Psoas muscle (tissue), 8 donors: ENCODE measurements at regions of chr19 and their contacts with region 1.

Region 1: DNA sequence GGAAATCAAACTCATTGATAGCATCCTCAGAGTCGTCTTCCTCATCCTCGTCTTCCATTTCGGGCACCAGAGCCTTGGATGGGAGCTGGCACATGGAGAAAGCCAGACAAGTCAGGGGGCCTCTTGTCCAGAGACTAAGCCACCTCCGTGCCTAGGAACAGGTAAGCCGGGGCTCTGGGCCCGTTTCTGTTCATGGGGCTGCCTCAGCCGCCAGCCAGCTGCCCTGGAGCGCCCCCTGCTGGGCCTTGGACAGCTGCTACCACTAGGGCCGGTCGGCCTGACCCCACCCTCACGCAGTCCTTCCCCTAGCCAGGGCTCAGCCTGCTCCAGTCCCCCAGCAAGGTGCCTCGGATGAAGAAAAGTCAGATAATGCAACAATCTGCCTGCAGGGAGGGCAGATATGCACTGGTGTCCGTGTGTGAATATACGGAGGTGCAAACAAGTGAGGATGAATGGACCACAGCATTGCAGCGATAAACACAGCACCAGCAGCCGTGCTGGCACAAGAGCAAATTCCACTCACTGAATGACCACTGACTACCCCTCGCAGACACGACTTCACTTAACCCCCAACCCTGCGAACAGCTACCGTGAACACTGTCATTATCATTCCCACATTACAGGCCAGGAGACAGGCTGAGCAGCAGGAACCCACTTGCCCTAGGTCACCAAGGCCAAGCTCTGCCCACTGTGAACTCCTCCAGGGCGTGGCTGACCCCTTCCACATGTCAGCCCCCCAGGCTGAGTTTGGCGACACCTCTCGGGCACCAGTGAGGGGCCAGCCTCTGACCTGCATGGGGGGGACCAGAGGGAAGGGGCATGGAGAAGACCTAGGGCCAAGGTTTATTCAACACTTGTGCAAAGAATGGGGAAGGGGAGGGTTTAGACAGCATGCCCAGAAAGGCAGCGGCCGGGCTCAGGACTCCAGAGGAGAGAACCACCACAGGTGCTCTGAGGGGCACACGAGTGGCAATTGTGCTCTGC is 12.1 kb upstream of the PRKD2 start:
- DNase-seq: peak; percentile 80 to 85
- ATAC-seq: peak; percentile 71 to 80 (median 74)
- H3K4me3 ChIP-seq: no peak overlapping the region
- H3K27ac ChIP-seq: no peak overlapping the region
- H3K4me1 ChIP-seq: no peaks in the 10 kb centered on the region
- H3K27me3 ChIP-seq: no peaks in the 10 kb centered on the region
- CTCF ChIP-seq: peak; percentile 89

Region 2: DNA sequence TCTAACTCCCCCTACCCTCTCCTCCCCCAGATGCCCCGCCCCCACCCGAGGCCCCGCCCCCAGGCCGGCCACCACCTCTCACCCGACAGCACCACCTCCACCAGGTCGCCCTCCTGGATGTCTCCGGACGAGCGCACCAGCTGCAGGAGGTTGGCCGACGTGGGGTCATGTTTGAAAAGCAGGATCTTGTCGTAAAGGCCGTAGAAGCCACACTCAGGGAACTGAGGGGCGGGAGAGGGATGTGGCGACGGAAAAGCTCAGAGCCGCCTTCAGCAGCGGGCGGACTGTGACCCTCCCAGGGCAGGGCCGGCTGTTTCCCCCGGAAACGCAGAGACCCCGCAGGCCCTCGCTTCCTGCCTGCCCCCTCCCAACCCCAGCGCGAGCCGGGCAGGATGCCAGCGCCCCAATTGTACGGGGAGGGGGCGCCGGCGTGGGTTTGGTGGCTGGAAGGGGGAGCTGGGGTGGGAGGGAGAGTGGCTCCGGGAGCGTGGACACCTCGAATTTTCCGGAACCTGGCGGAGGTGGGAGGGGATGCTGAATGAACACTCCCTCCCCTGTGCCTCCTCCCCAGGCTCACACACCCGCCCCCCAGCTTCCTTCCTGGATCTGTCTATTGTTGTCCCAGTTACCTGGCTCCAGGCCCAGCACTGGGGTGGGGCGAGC is 15.1 kb before region 1 on chr19:
- intact Hi-C with region 1: loop called in 1 of 2 experiments (anchors 2 kb)
- DNase-seq: peak; percentile 86 to 92
- ATAC-seq: peak in 3 of 4 donors; percentile 36 to 46 (median 44)
- H3K4me3 ChIP-seq: peak overlapping the region; percentile 89
- H3K27ac ChIP-seq: peak overlapping the region; percentile 69
- H3K4me1 ChIP-seq: peaks cover 18% of the 10 kb centered on the region
- H3K27me3 ChIP-seq: no peaks in the 10 kb centered on the region
- CTCF ChIP-seq: no peak

Region 3: GRCh38 chr19:46913852-46914430 is 185.0 kb after region 1 on chr19:
- intact Hi-C with region 1: no loop called
- DNase-seq: no peak
- ATAC-seq: peak in 1 of 4 donors; percentile 29
- H3K4me3 ChIP-seq: no peak overlapping the region
- H3K27ac ChIP-seq: peak overlapping the region; percentile 47
- H3K4me1 ChIP-seq: peaks cover 36% of the 10 kb centered on the region
- H3K27me3 ChIP-seq: no peaks in the 10 kb centered on the region
- CTCF ChIP-seq: no peak